Caco-2 (cell line): ENCODE measurements at regions of chr11 and their contacts with region 1.

Region 1: GRCh38 chr11:24093375-24093774 is 403.5 kb upstream of the LUZP2 start:
- DNase-seq: no peak
- H3K4me3 ChIP-seq: no peak overlapping the region
- H3K4me3 Mint-ChIP-seq: no peak overlapping the region
- H3K27ac Mint-ChIP-seq: no peak overlapping the region
- H3K4me1 ChIP-seq: no peaks in the 10 kb centered on the region
- H3K4me1 Mint-ChIP-seq: no peaks in the 10 kb centered on the region
- H3K27me3 ChIP-seq: no peaks in the 10 kb centered on the region
- H3K27me3 Mint-ChIP-seq: no peaks in the 10 kb centered on the region
- CTCF ChIP-seq: no peak

Region 2: GRCh38 chr11:24064309-24064903 is 29.0 kb before region 1 on chr11:
- CTCF ChIA-PET with region 1: no interaction called
- POLR2A ChIA-PET with region 1: no interaction called
- intact Hi-C with region 1: no loop called
- DNase-seq: no peak
- H3K4me3 ChIP-seq: no peak overlapping the region
- H3K4me3 Mint-ChIP-seq: no peak overlapping the region
- H3K27ac Mint-ChIP-seq: no peak overlapping the region
- H3K4me1 ChIP-seq: peaks cover 20% of the 10 kb centered on the region
- H3K4me1 Mint-ChIP-seq: no peaks in the 10 kb centered on the region
- H3K27me3 ChIP-seq: no peaks in the 10 kb centered on the region
- H3K27me3 Mint-ChIP-seq: no peaks in the 10 kb centered on the region
- CTCF ChIP-seq: no peak

Region 3: DNA sequence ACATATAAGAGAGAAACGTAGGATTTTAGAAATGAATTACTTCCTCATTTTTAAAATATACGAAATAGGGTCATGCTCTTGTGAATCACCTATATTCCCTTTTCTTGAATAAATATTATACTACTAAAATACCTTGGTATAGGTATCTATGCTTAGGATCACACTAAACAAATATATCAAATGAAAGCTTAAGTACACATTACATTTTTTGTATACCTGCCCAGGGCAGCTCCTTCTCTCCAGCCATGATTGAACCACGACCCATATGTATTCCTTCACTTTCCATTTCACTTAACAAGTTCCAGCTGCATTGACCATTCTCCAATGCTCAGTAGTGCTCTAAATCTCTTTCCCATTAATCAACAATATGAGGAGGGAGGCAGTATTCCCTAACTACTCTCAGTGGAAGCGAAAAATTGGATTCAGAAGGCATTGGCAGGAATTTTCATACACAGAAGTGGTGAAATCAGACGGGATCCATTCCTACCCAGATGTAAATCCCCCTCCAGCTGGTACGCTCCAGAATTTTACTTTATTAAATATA is 31.4 kb after region 1 on chr11:
- CTCF ChIA-PET with region 1: no interaction called
- POLR2A ChIA-PET with region 1: no interaction called
- intact Hi-C with region 1: loop called (anchors 2 kb)
- DNase-seq: no peak
- H3K4me3 ChIP-seq: no peak overlapping the region
- H3K4me3 Mint-ChIP-seq: no peak overlapping the region
- H3K27ac Mint-ChIP-seq: no peak overlapping the region
- H3K4me1 ChIP-seq: no peaks in the 10 kb centered on the region
- H3K4me1 Mint-ChIP-seq: no peaks in the 10 kb centered on the region
- H3K27me3 ChIP-seq: no peaks in the 10 kb centered on the region
- H3K27me3 Mint-ChIP-seq: no peaks in the 10 kb centered on the region
- CTCF ChIP-seq: no peak

Region 4: DNA sequence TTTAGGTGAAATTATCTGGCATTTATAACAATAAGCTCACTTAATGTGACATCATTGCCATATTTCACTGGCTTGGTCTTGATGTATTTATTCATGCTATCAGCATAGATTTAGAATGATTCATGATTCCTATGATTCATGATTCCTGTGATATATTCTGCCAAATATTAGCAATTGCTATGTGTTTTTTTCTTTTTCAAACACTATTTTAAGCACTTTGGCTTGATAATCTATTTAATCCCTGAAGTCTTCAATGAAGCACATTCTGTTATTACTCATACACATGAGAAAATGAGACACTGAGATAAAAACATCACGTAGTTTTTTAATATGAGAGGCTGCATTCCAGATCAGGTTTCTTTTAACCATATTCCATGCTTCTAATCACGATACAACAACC is 482.0 kb after region 1 on chr11:
- CTCF ChIA-PET with region 1: no interaction called
- POLR2A ChIA-PET with region 1: no interaction called
- intact Hi-C with region 1: no loop called
- DNase-seq: no peak
- H3K4me3 ChIP-seq: no peak overlapping the region
- H3K4me3 Mint-ChIP-seq: no peak overlapping the region
- H3K27ac Mint-ChIP-seq: no peak overlapping the region
- H3K4me1 ChIP-seq: no peaks in the 10 kb centered on the region
- H3K4me1 Mint-ChIP-seq: no peaks in the 10 kb centered on the region
- H3K27me3 ChIP-seq: no peaks in the 10 kb centered on the region
- H3K27me3 Mint-ChIP-seq: no peaks in the 10 kb centered on the region
- CTCF ChIP-seq: no peak